Heart left ventricle (tissue), 16 donors: ENCODE measurements at regions of chr18 and their contacts with region 1.

Region 1: DNA sequence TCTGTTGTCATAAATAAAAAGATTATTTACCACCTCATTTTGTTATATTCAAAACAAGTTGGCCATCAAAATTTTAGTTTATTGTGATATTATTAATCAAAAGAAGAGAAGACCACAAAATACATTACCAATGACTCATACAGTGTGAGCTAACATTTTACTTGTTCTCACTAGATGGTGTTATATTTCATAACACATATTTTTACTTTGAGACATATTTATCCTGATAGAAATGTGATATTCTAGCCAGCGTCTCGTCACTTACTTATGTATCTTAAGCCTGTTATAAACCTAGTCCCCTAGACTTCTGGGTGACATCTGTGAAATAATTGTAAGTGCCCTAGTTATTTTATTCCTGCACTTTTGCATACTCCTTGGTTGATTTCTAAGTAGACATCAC is 263.2 kb downstream of the CDH7 start:
- DNase-seq: no peak
- ATAC-seq: no peak
- H3K4me3 ChIP-seq: no peak overlapping the region
- H3K27ac ChIP-seq: no peak overlapping the region
- H3K4me1 ChIP-seq: no peaks in the 10 kb centered on the region
- H3K27me3 ChIP-seq: no peaks in the 10 kb centered on the region
- CTCF ChIP-seq: no peak
- POLR2A ChIP-seq: no peak

Region 2: GRCh38 chr18:65955747-65956146 is 58.2 kb before region 1 on chr18:
- intact Hi-C with region 1: loop called in 1 of 10 experiments (anchors 10 kb)
- DNase-seq: no peak
- ATAC-seq: no peak
- H3K4me3 ChIP-seq: no peak overlapping the region
- H3K27ac ChIP-seq: no peak overlapping the region
- H3K4me1 ChIP-seq: no peaks in the 10 kb centered on the region
- H3K27me3 ChIP-seq: no peaks in the 10 kb centered on the region
- CTCF ChIP-seq: no peak
- POLR2A ChIP-seq: no peak